Activated B cell treated with CpG ODN at 0.5 μM for 24 hours (primary cell): ENCODE measurements at regions of chr19 and their contacts with region 1.

Region 1: DNA sequence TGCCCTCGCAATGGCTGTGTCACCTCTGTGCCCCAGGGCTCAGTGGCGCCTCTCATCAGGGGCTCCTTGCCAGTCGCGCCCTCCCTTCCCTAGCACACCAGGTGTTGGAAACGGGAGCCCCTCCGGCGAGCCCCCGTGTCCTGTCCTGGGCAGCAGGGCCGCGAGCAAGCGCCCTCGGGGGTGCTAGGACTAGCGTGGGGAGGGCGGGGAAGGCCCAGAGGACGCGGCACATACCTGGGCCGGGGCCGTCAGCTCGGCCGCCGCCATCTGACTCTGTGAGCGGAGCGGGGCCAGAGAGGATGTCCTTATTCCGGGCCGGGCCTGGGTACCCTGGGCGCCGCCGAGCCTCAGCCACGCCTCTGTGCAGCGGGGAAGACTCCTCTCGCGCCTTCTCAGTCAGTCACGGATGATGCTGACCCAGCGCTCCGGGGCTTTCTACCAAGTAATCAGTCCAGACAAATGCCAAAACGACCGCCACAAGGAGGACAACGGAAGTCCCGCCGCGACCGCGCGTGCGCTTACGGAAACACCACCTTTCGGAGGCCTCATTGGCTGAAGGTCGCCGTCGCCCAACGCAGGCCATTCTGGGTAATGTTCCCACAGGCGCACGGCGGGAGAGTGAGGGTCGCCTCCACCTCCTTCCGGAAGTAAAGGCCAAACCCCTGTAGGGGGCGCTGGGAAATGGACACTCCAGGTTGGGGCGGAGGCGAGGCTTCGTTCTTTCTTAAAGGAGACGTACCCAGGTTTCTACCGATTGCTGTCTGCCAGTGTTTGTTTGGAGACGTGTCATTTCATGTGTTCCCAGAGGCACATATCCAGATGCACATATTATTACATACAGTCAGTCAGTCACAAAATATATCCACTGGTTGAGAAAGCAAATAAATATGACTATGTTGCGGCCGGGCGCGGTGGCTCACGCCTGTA is at the start of gene ZNF256:
- DNase-seq: peak; percentile 83
- ATAC-seq: peak; percentile 99
- H3K4me3 Mint-ChIP-seq: peak within 1 kb of the TSS; percentile 96
- H3K27ac Mint-ChIP-seq: peak within 1 kb of the TSS; percentile 89
- H3K4me1 Mint-ChIP-seq: peaks cover 30% of the 10 kb centered on the region
- H3K27me3 Mint-ChIP-seq: no peaks in the 10 kb centered on the region
- CTCF ChIP-seq: no peak
- total RNA-seq, gene ZNF256: 16.6 and 20.2 TPM in 2 replicates

Region 2: GRCh38 chr19:57746580-57747471 is 200.6 kb before region 1 on chr19 and contains the start of gene ZNF776:
- CTCF ChIA-PET with region 1: no interaction called
- POLR2A ChIA-PET with region 1: no interaction called
- intact Hi-C with region 1: loop called (anchors 1 kb)
- DNase-seq: peak; percentile 54
- ATAC-seq: peak; percentile 95
- H3K4me3 Mint-ChIP-seq: peak within 1 kb of the TSS; percentile 91
- H3K27ac Mint-ChIP-seq: peak within 1 kb of the TSS; percentile 87
- H3K4me1 Mint-ChIP-seq: peaks cover 42% of the 10 kb centered on the region
- H3K27me3 Mint-ChIP-seq: no peaks in the 10 kb centered on the region
- CTCF ChIP-seq: no peak
- total RNA-seq, gene ZNF776: 26.5 and 29.9 TPM in 2 replicates

Region 3: GRCh38 chr19:57914531-57914930 is 32.9 kb before region 1 on chr19:
- CTCF ChIA-PET with region 1: no interaction called
- POLR2A ChIA-PET with region 1: no interaction called
- intact Hi-C with region 1: loop called (anchors 1 kb)
- DNase-seq: no peak
- ATAC-seq: no peak
- H3K4me3 Mint-ChIP-seq: peak overlapping the region; percentile 94
- H3K27ac Mint-ChIP-seq: no peak overlapping the region
- H3K4me1 Mint-ChIP-seq: peaks cover 34% of the 10 kb centered on the region
- H3K27me3 Mint-ChIP-seq: no peaks in the 10 kb centered on the region
- CTCF ChIP-seq: no peak

Region 4: GRCh38 chr19:58002384-58003173 is 55.1 kb after region 1 on chr19 and contains the start of gene ZNF606:
- CTCF ChIA-PET with region 1: no interaction called
- POLR2A ChIA-PET with region 1: interaction called, 6 read pairs
- intact Hi-C with region 1: loop called (anchors 1 kb)
- DNase-seq: peak; percentile 87
- ATAC-seq: peak; percentile 97
- H3K4me3 Mint-ChIP-seq: peak within 1 kb of the TSS; percentile 88
- H3K27ac Mint-ChIP-seq: peak within 1 kb of the TSS; percentile 87
- H3K4me1 Mint-ChIP-seq: peaks cover 38% of the 10 kb centered on the region
- H3K27me3 Mint-ChIP-seq: no peaks in the 10 kb centered on the region
- CTCF ChIP-seq: no peak
- total RNA-seq, gene ZNF606: 27.8 and 32.9 TPM in 2 replicates

Region 5: GRCh38 chr19:58067240-58067912 is 119.9 kb after region 1 on chr19:
- CTCF ChIA-PET with region 1: no interaction called
- POLR2A ChIA-PET with region 1: no interaction called
- intact Hi-C with region 1: no loop called
- DNase-seq: no peak
- ATAC-seq: no peak
- H3K4me3 Mint-ChIP-seq: no peak overlapping the region
- H3K27ac Mint-ChIP-seq: no peak overlapping the region
- H3K4me1 Mint-ChIP-seq: no peaks in the 10 kb centered on the region
- H3K27me3 Mint-ChIP-seq: no peaks in the 10 kb centered on the region
- CTCF ChIP-seq: no peak